HepG2 (cell line): ENCODE measurements at regions of chrX and their contacts with region 1.

Region 1: GRCh38 chrX:72540318-72540717 is 32.3 kb downstream of the HDAC8 start:
- DNase-seq: peak; percentile 9
- ATAC-seq: no peak
- H3K4me3 ChIP-seq: no peak overlapping the region
- H3K27ac ChIP-seq: no peak overlapping the region
- H3K4me1 ChIP-seq: no peaks in the 10 kb centered on the region
- H3K27me3 ChIP-seq: no peaks in the 10 kb centered on the region
- CTCF ChIP-seq: peak; percentile 34; the same call in 1 of the 2 replicates
- EP300 ChIP-seq: no peak
- POLR2A ChIP-seq: no peak
- RAD21 ChIP-seq: no peak

Region 2: DNA sequence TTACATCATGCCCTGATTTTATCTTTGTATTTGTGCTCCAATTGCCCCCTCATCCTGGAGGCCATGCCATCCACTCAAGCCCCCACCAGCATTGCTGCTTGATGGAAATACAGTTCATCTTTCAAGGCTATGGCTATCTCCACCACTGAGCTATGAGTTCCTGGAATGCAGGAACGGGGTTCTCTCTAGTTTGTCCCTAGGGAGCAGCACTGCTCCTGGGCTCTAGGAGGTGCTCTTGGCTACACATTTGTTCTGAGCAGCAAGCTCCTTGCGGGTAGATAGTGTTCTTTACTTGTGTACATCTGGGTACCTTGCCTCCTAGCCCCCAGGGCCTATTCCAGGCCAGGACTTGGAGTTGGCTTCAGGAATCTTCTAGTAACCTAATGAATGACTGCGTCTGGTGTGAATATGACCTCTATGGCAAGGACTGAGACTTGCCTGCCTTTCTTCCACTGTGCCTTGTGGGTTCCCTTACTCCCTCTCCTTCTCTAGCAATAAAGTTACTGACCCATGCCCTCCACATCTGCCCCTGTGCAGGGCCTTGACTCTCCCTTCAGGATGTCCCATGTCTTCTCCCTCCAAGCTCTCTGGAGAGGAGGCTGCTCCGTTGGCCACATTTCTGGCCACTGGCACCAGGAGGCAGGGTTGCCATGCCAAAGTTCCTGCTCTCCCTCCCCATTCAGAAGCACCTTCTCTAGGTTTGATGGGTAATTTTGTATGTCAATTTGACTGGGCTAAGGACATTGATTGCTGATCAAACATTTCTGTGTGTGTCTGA is 242.2 kb before region 1 on chrX:
- CTCF ChIA-PET with region 1: interaction called, 6 read pairs
- POLR2A ChIA-PET with region 1: no interaction called
- in situ Hi-C with region 1: loop called (anchors 10 kb)
- intact Hi-C with region 1: loop called (anchors 1 kb)
- DNase-seq: peak; percentile 16
- ATAC-seq: peak; percentile 95
- H3K4me3 ChIP-seq: no peak overlapping the region
- H3K27ac ChIP-seq: no peak overlapping the region
- H3K4me1 ChIP-seq: no peaks in the 10 kb centered on the region
- H3K27me3 ChIP-seq: peaks cover 0 to 11% of the 10 kb centered on the region in 2 experiments; a peak in 3 of 5 replicates
- CTCF ChIP-seq: peak; percentile 75
- EP300 ChIP-seq: no peak
- POLR2A ChIP-seq: no peak
- RAD21 ChIP-seq: no peak

Region 3: DNA sequence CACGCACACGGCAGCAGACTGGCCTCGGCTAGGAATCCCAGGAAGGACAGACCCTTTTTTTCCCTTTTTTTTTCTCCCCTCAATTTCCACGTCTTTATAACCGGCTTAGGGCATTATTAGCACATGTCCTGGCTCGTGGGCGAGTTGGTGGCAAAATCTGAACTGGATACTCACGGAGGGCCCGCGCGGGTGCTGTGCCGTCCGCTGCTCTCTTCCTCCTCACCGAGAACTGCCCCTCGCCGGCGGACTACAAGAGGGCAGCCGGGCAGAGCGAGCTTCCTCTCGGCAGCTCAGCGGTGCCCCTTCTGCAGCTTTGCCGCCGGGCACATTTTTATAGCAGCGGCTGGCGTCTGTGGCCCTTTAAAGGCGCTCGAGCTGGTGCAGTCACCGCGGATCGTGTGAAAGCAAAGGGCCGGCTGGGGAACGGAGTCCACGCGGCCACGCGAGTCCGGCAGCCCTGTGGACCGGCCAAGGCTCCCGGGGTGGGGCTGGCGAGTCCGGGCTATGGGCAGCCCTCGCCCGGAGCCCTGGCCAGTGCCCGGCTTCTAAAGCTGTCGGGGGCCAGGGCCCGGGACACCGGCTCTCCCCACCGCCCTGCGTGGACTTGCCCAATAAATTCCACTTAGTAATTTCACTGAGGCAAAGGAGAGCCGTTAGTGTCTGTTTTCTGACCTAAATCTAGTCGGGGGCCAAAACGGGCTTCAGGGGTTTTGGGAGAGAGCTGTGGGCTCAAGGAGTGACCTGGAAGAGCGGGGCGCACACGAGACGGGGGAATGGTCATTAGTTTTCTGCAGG is 233.3 kb before region 1 on chrX:
- CTCF ChIA-PET with region 1: no interaction called
- POLR2A ChIA-PET with region 1: no interaction called
- in situ Hi-C with region 1: loop called (anchors 10 kb)
- intact Hi-C with region 1: no loop called
- DNase-seq: peak; percentile 17
- ATAC-seq: peak; percentile 78
- H3K4me3 ChIP-seq: peak overlapping the region; percentile 43 to 60 (median 49); a peak in 5 of 6 replicates
- H3K27ac ChIP-seq: no peak overlapping the region
- H3K4me1 ChIP-seq: peaks cover 30% of the 10 kb centered on the region
- H3K27me3 ChIP-seq: peaks cover 6 to 55% of the 10 kb centered on the region in 2 experiments; a peak in 4 of 5 replicates
- CTCF ChIP-seq: no peak
- EP300 ChIP-seq: no peak
- POLR2A ChIP-seq: no peak
- RAD21 ChIP-seq: no peak

Region 4: GRCh38 chrX:72634331-72634730 is 94.0 kb after region 1 on chrX:
- CTCF ChIA-PET with region 1: no interaction called
- POLR2A ChIA-PET with region 1: no interaction called
- in situ Hi-C with region 1: no loop called
- intact Hi-C with region 1: no loop called
- DNase-seq: no peak
- ATAC-seq: no peak
- H3K4me3 ChIP-seq: no peak overlapping the region
- H3K27ac ChIP-seq: no peak overlapping the region
- H3K4me1 ChIP-seq: no peaks in the 10 kb centered on the region
- H3K27me3 ChIP-seq: no peaks in the 10 kb centered on the region
- CTCF ChIP-seq: no peak
- EP300 ChIP-seq: no peak
- POLR2A ChIP-seq: no peak
- RAD21 ChIP-seq: no peak

Region 5: DNA sequence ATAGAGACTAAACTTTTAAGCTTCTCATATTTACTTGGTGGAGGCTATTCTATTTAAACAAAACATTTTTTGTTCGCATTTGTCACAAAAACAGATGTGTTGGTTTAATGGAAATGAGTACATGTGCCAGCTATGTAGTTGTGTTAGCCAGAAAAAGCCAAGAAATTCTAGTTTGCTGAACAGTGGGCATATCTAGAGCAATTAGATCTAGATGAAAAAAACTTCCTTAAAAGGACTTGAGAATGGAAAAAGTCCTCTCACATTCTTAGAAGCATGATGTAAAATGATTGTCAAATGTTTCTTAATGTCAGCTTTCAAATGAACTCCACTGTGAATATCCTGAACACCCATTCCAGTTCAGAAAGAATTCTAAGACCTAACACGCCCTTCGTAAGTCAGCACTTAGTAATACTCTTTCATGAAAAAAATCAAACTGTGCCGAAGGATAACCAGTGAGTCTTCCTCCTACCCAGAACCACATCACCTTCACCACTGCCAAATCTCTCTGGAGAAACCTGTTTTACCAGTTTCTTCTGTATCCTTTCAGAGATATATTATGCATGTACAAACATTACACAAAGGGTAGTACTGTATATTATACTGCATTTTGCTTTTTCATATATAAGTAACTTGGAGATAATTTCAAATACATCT is 145.6 kb after region 1 on chrX:
- CTCF ChIA-PET with region 1: no interaction called
- POLR2A ChIA-PET with region 1: no interaction called
- in situ Hi-C with region 1: no loop called
- intact Hi-C with region 1: no loop called
- DNase-seq: no peak
- ATAC-seq: no peak
- H3K4me3 ChIP-seq: no peak overlapping the region
- H3K27ac ChIP-seq: no peak overlapping the region
- H3K4me1 ChIP-seq: no peaks in the 10 kb centered on the region
- H3K27me3 ChIP-seq: no peaks in the 10 kb centered on the region
- CTCF ChIP-seq: no peak
- EP300 ChIP-seq: no peak
- POLR2A ChIP-seq: no peak
- RAD21 ChIP-seq: no peak